Psoas muscle (tissue), 8 donors: ENCODE measurements at regions of chr18 and their contacts with region 1.

Region 1: DNA sequence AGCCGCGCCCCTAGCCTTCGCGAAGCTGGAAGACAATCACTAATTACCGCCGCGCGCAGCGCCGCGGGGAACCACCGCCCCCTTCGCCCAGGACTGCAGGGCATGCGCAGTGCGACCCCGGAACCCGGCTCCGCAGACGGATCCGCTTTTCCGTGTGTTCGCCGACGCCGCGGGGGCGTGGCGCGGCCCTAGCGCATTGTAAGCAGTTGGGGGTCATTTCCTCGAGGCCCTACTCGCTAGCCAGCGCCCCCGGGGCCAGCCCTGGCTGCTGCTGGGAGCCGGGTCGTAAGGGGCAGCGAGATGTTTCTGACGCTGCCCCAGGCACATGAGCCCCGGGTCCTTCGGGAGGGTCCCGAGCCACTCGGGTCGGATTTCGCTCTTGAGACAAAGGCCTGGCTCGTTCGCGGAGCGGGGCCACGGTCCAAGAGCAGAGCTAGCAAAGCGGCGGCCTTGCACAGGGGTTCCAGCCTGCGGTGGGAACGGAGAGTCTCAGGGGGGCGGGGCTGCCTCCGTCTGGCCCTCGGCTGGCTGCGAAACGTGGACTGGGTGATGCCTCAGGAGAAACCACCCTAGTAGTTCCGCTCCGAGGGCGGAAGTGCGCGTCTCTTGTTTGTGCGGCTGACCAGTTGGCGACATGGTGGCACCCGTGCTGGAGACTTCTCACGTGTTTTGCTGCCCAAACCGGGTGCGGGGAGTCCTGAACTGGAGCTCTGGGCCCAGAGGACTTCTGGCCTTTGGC is at the starts of genes ELP2 and SLC39A6:
- DNase-seq: peak; percentile 96 to 98
- ATAC-seq: peak; percentile 97 to 98 (median 98)
- H3K4me3 ChIP-seq: peak within 1 kb of the TSS; percentile 87
- H3K27ac ChIP-seq: peak within 1 kb of the TSS; percentile 99
- H3K4me1 ChIP-seq: peaks cover 24% of the 10 kb centered on the region
- H3K27me3 ChIP-seq: no peaks in the 10 kb centered on the region
- CTCF ChIP-seq: peak; percentile 4
- total RNA-seq, gene ELP2: 54.7 to 65.5 (median 57.4) TPM
- total RNA-seq, gene SLC39A6: 10.0 to 21.3 (median 13.5) TPM

Region 2: DNA sequence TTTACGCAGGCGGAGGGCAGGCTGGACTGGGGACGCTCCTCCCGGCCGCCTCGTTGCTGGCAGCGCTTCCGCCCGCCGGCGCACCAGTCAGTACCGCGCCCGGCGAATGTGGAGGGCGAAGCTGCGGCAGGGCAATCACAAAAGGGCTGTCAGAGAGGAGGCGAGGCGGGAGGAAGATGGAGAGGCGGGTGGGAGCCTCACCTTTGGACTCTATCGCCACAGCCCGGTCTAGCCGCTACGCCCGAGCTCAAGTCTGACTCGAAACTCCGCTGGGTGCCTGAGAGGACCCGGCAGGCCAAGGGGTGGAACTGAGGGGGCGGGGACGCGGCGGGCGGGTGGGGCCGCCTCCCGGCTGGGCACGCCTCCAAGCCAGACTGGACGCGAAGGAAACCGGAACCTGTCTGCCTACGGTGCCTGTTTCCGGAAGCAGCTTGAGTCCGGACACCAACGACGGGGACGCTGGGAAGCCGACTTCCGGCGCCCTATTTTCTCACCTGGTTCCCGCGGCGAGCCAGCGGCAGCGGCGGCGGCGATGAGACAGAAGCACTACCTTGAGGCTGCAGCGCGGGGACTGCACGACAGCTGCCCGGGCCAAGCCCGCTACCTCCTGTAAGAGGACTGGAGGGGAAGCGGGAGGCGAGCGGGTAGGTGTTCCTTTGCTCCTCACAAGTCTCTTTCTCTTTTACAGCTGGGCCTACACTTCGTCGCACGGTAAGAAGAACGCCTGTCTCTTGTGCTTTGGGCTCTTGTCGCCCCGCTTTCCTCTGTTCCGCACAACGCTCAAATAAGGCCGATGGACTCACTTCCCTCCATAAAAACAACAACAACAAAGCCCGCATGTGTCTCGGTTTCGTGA is 157.0 kb before region 1 on chr18 and contains the start of gene RMP24:
- intact Hi-C with region 1: loop called in 1 of 2 experiments (anchors 5 kb)
- DNase-seq: peak; percentile 94 to 97
- ATAC-seq: peak; percentile 98
- H3K4me3 ChIP-seq: peak within 1 kb of the TSS; percentile 71
- H3K27ac ChIP-seq: peak within 1 kb of the TSS; percentile 88
- H3K4me1 ChIP-seq: peaks cover 19% of the 10 kb centered on the region
- H3K27me3 ChIP-seq: no peaks in the 10 kb centered on the region
- CTCF ChIP-seq: no peak

Region 3: GRCh38 chr18:36067055-36067957 is 62.2 kb before region 1 on chr18 and contains the start of gene RPRD1A:
- intact Hi-C with region 1: loop called in 1 of 2 experiments (anchors 5 kb)
- DNase-seq: peak; percentile 98
- ATAC-seq: peak; percentile 97 to 99 (median 98)
- H3K4me3 ChIP-seq: peak within 1 kb of the TSS; percentile 88
- H3K27ac ChIP-seq: peak within 1 kb of the TSS; percentile 95
- H3K4me1 ChIP-seq: peaks cover 14% of the 10 kb centered on the region
- H3K27me3 ChIP-seq: no peaks in the 10 kb centered on the region
- CTCF ChIP-seq: no peak
- total RNA-seq, gene RPRD1A: 41.5 to 59.0 (median 50.3) TPM